Esophagus muscularis mucosa (tissue), 4 donors: ENCODE measurements at regions of chr4 and their contacts with region 1.

Region 1: GRCh38 chr4:140373328-140374129 is at the start of gene SCOC:
- DNase-seq: peak; percentile 100
- H3K4me3 ChIP-seq: peak within 1 kb of the TSS; percentile 82 to 97 (median 86)
- H3K27ac ChIP-seq: peak within 1 kb of the TSS; percentile 91 to 98 (median 95)
- H3K4me1 ChIP-seq: peaks cover 18 to 48% (median 45%) of the 10 kb centered on the region in 4 donors
- H3K27me3 ChIP-seq: no peaks in the 10 kb centered on the region
- CTCF ChIP-seq: no peak
- EP300 ChIP-seq: no peak
- POLR2A ChIP-seq: no peak
- total RNA-seq, gene SCOC: 39.8 to 64.4 (median 55.0) TPM

Region 2: GRCh38 chr4:140529434-140529833 is 155.9 kb after region 1 on chr4:
- intact Hi-C with region 1: loop called (anchors 5 kb)
- DNase-seq: no peak
- H3K4me3 ChIP-seq: no peak overlapping the region
- H3K27ac ChIP-seq: no peak overlapping the region
- H3K4me1 ChIP-seq: peaks cover 7 to 15% (median 10%) of the 10 kb centered on the region in 4 donors
- H3K27me3 ChIP-seq: no peaks in the 10 kb centered on the region
- CTCF ChIP-seq: no peak
- EP300 ChIP-seq: no peak
- POLR2A ChIP-seq: no peak